Pancreas (tissue), 10 donors: ENCODE measurements at regions of chr19 and their contacts with region 1.

Region 1: GRCh38 chr19:2221918-2222317 is 14.2 kb downstream of the PLEKHJ1 start:
- DNase-seq: no peak
- ATAC-seq: no peak
- H3K4me3 ChIP-seq: no peak overlapping the region
- H3K27ac ChIP-seq: no peak overlapping the region
- H3K4me1 ChIP-seq: no peaks in the 10 kb centered on the region
- H3K27me3 ChIP-seq: no peaks in the 10 kb centered on the region
- CTCF ChIP-seq: no peak

Region 2: DNA sequence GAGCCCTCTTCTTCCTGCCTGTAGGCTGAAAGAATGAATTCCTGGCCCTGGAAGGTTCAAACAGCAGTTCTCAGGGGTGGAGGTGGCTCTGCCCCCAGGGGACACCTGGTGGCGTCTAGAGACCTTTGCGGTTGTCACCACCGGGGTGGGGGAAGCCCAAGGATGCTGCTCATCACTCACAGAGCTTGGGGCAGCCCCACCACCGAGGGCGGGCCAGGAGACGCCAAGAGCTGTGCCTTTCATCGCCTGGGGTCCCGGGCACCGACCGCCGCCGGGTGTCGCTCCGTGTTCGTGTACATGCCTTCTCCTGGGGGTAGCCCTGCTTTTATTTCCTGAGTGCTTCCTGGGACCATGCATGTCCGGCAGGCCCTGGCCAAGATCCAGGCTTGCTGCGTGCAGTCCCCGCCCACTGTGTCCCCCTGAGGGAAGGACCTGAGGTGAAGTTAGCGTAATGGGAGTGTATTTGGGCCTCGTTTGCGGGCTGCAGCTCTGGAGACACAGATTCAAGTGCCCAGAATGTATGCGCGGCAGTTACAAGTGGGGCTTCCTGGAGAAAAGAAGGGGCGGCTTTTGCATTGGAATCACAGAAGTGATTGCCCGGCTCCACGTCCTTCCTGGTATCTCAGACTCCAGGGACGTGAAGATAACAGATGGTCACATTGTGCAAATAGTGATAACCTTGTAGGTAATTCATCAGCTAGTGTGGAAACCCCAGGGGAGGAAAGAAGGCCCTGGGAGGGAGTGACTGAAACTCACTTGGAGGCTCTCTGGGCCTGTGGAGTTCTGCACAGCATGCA is 50.4 kb before region 1 on chr19:
- intact Hi-C with region 1: loop called in 1 of 3 experiments (anchors 10 kb)
- DNase-seq: peak in 5 of 6 donors; percentile 58 to 82 (median 67)
- ATAC-seq: peak in 2 of 4 donors; percentile 7 to 12
- H3K4me3 ChIP-seq: no peak overlapping the region
- H3K27ac ChIP-seq: peak overlapping the region; percentile 54 to 92 (median 56)
- H3K4me1 ChIP-seq: peaks cover 42 to 63% (median 60%) of the 10 kb centered on the region in 3 donors
- H3K27me3 ChIP-seq: no peaks in the 10 kb centered on the region
- CTCF ChIP-seq: no peak